ENCODE measurements at regions of chr1 and their contacts with region 1.

Region 1: DNA sequence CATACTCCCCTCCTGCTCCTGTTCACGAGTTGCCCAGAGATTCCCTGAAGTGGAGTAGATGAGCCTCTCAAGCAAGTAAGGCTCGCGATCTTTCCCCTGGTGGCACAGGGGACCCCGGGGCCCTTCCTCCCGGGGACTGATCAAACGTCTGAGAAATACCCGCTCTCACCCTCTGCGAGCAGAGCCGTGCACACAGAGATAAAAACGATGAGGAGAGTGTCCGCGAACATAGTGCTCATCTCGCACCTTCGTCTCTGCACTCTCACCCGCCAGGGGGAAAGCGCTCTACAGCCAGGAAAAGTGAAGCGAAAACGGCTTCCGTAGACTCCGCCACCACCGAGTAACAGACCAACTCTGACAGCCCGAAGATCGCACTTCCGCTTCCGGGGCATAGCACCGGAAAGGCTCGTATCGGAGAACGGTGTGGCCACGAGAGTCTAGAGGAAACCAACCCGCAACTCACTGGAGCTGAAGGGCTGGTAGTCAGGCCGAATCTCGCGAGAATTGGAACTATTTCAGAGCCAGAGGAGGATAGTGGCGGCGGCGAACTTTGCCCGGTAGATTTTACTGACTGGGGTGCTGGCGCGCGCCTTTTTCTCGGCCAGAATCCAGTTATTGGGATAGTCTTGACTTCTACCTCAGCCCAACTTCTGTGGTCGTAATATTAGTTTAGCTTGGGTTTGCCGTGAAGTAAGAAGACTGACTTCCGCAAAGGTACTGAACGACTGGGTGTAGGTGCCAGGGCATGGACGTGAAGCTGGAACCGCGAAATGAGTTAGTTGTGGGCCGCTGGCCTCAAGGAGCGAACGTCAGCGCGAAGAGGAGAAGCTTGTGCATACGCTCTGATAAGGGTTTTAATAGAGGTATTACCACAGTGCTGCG is at the start of gene TMCO1:
- DNase-seq: peak; percentile 99
- H3K4me3 ChIP-seq: peak within 1 kb of the TSS; percentile 85
- H3K27ac ChIP-seq: peak within 1 kb of the TSS; percentile 78
- H3K4me1 ChIP-seq: peaks cover 17% of the 10 kb centered on the region
- CTCF ChIP-seq: peak; percentile 38; the same call in 1 of the 2 replicates
- total RNA-seq, gene TMCO1: 22.9 and 23.7 TPM in 2 replicates

Region 2: GRCh38 chr1:165630629-165631341 is 138.0 kb before region 1 on chr1 and contains the start of gene MGST3:
- CTCF ChIA-PET with region 1: no interaction called
- POLR2A ChIA-PET with region 1: no interaction called
- intact Hi-C with region 1: loop called (anchors 10 kb)
- DNase-seq: peak; percentile 97
- H3K4me3 ChIP-seq: peak within 1 kb of the TSS; percentile 88
- H3K27ac ChIP-seq: peak within 1 kb of the TSS; percentile 77
- H3K4me1 ChIP-seq: peaks cover 53% of the 10 kb centered on the region
- CTCF ChIP-seq: no peak
- total RNA-seq, gene MGST3: 95.7 and 127 TPM in 2 replicates

Region 3: DNA sequence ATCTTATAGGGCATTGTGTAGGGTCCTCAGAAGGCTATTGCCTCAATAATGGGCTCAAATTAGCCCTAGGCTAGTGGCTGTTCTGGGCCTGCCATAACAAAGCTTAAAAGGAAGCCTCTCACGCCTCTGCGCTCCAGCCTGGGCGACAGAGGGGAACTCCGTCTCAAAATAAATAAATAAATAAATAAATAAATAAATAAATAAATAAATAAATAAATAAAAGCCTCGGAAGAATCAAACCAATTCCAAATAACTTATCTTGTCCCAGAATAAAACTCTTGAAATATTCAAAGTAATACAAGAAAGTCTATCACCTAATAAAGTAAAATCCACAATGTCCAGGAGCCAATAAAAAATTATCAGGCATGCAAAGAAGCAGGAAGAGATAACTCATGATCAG is 56.0 kb before region 1 on chr1:
- CTCF ChIA-PET with region 1: no interaction called
- POLR2A ChIA-PET with region 1: no interaction called
- intact Hi-C with region 1: no loop called
- DNase-seq: no peak
- H3K4me3 ChIP-seq: no peak overlapping the region
- H3K27ac ChIP-seq: no peak overlapping the region
- H3K4me1 ChIP-seq: peaks cover 9% of the 10 kb centered on the region
- CTCF ChIP-seq: no peak

Region 4: DNA sequence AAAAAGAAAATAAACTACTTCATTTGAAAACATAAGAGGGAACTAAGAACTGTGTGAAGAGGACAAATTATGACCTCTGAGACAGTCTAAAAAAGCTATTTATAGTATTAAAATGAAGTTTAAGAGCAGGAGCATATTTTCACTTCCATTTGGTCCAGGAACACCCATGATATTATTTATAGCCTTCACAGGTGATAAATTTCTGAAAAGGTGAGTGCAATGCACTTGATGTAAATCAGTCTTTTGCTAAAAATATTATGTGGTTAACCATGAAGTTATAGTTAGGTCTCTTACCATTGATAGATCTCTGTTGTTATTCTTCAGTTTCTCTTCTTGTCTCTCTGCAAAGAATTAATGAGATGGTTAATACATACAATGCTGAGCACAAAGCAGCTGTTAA is 14.8 kb before region 1 on chr1:
- CTCF ChIA-PET with region 1: no interaction called
- POLR2A ChIA-PET with region 1: interaction called, 12 read pairs
- intact Hi-C with region 1: no loop called
- DNase-seq: peak; percentile 49
- H3K4me3 ChIP-seq: no peak overlapping the region
- H3K27ac ChIP-seq: no peak overlapping the region
- H3K4me1 ChIP-seq: peaks cover 14% of the 10 kb centered on the region
- CTCF ChIP-seq: no peak

Region 5: GRCh38 chr1:165842671-165843129 is 73.9 kb after region 1 on chr1:
- CTCF ChIA-PET with region 1: no interaction called
- POLR2A ChIA-PET with region 1: no interaction called
- intact Hi-C with region 1: no loop called
- DNase-seq: peak; percentile 63
- H3K4me3 ChIP-seq: no peak overlapping the region
- H3K27ac ChIP-seq: no peak overlapping the region
- H3K4me1 ChIP-seq: peaks cover 25% of the 10 kb centered on the region
- CTCF ChIP-seq: no peak

Region 6: DNA sequence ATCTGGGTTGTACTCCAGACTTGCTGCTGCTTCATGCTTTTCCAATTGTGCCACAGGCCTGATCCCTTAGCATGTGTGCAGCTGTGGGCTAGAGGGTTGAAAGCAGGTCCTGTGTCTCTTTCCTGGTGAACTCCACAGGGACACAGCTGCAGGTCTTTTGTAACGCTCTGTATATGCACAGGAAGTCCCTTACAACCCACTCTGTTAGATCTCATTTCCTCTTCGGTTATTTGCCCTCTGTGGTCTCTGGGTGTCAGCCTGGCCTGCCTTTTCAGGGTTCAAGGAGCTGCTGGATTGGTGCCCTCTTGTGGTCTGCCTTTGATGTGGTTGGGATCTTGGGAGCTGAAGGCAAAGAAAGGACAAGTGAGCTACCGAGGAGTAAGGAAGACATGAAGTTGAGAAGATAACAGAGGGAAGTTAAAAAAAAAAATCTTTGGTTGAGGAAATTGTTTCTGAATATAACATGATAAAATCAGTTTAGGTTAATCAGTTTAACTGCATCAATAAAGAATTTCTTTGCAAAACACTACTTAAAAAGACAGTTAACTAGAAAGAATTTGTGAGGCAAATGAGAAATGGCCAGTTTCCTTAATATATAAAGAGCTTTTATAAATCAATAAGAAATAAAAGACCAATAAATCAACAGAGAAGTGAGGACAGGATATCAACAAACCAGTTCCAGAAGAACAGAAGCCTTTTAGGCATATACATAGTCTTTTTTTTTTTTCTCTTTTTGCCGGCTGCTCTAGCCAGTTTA is 102.7 kb after region 1 on chr1:
- CTCF ChIA-PET with region 1: no interaction called
- POLR2A ChIA-PET with region 1: no interaction called
- intact Hi-C with region 1: loop called (anchors 1 kb)
- DNase-seq: peak; percentile 84
- H3K4me3 ChIP-seq: no peak overlapping the region
- H3K27ac ChIP-seq: peak overlapping the region; percentile 54
- H3K4me1 ChIP-seq: peaks cover 18% of the 10 kb centered on the region
- CTCF ChIP-seq: peak; percentile 89

Region 7: GRCh38 chr1:166007176-166007575 is 238.4 kb after region 1 on chr1:
- CTCF ChIA-PET with region 1: no interaction called
- POLR2A ChIA-PET with region 1: no interaction called
- intact Hi-C with region 1: no loop called
- DNase-seq: no peak
- H3K4me3 ChIP-seq: no peak overlapping the region
- H3K27ac ChIP-seq: no peak overlapping the region
- H3K4me1 ChIP-seq: no peaks in the 10 kb centered on the region
- CTCF ChIP-seq: no peak